ENCODE measurements at regions of chr1 and their contacts with region 1.

Region 1: GRCh38 chr1:178612261-178612660 is 99.4 kb downstream of the TEX35 start:
- DNase-seq: no peak
- H3K4me3 ChIP-seq: no peak overlapping the region
- H3K4me3 Mint-ChIP-seq: no peak overlapping the region
- H3K27ac Mint-ChIP-seq: no peak overlapping the region
- H3K4me1 ChIP-seq: no peaks in the 10 kb centered on the region
- H3K4me1 Mint-ChIP-seq: no peaks in the 10 kb centered on the region
- H3K27me3 ChIP-seq: no peaks in the 10 kb centered on the region
- H3K27me3 Mint-ChIP-seq: no peaks in the 10 kb centered on the region
- CTCF ChIP-seq: no peak

Region 2: GRCh38 chr1:178749581-178750166 is 137.4 kb after region 1 on chr1:
- CTCF ChIA-PET with region 1: interaction called, 7 read pairs
- POLR2A ChIA-PET with region 1: no interaction called
- intact Hi-C with region 1: loop called (anchors 5 kb)
- DNase-seq: no peak
- H3K4me3 ChIP-seq: no peak overlapping the region
- H3K4me3 Mint-ChIP-seq: no peak overlapping the region
- H3K27ac Mint-ChIP-seq: no peak overlapping the region
- H3K4me1 ChIP-seq: no peaks in the 10 kb centered on the region
- H3K4me1 Mint-ChIP-seq: no peaks in the 10 kb centered on the region
- H3K27me3 ChIP-seq: no peaks in the 10 kb centered on the region
- H3K27me3 Mint-ChIP-seq: no peaks in the 10 kb centered on the region
- CTCF ChIP-seq: no peak